Sigmoid colon (tissue), 7 donors: ENCODE measurements at regions of chr18 and their contacts with region 1.

Region 1: GRCh38 chr18:29874519-29875098 is 1167.9 kb downstream of the DSC3 start:
- DNase-seq: no peak
- H3K4me3 ChIP-seq: no peak overlapping the region
- H3K27ac ChIP-seq: no peak overlapping the region
- H3K4me1 ChIP-seq: peaks cover 0 to 9% (median 0%) of the 10 kb centered on the region in 4 donors
- H3K27me3 ChIP-seq: no peaks in the 10 kb centered on the region
- CTCF ChIP-seq: peak in 1 of 4 experiments; percentile 19
- EP300 ChIP-seq: no peak
- POLR2A ChIP-seq: no peak

Region 2: GRCh38 chr18:29626094-29626493 is 248.5 kb before region 1 on chr18:
- intact Hi-C with region 1: no loop called
- DNase-seq: no peak
- H3K4me3 ChIP-seq: no peak overlapping the region
- H3K27ac ChIP-seq: no peak overlapping the region
- H3K4me1 ChIP-seq: no peaks in the 10 kb centered on the region
- H3K27me3 ChIP-seq: no peaks in the 10 kb centered on the region
- CTCF ChIP-seq: no peak
- EP300 ChIP-seq: no peak
- POLR2A ChIP-seq: no peak

Region 3: GRCh38 chr18:29930231-29930630 is 55.6 kb after region 1 on chr18:
- intact Hi-C with region 1: no loop called
- DNase-seq: no peak
- H3K4me3 ChIP-seq: no peak overlapping the region
- H3K27ac ChIP-seq: no peak overlapping the region
- H3K4me1 ChIP-seq: no peaks in the 10 kb centered on the region
- H3K27me3 ChIP-seq: no peaks in the 10 kb centered on the region
- CTCF ChIP-seq: no peak
- EP300 ChIP-seq: no peak
- POLR2A ChIP-seq: no peak

Region 4: DNA sequence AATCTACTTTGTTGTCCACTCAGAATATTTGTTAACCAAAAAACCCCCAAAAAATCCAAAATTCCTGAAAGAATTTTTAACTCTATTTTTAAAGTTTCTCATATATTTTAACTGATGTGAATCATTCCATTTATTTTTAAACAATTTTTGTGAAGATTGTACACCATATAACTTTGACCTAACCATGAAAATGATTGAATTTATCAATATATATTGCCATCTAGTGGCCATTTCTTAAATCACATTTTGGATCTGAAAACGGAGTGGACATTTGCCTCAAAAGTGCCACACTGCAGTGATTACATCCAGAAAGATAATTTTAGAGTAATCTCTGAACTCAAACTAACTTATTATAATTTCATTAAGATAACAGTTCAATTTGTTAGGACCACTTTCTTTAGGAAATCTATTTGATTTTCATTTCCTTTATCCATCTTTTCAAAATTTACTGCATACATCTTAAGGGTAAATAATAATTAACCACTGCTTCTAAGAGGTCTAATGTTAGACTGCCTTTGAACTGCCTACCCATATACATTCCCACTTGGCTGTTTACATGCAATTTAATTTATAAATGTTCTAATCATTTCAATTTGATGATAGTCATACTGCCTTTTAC is 1096.8 kb after region 1 on chr18:
- intact Hi-C with region 1: loop called (anchors 10 kb)
- DNase-seq: no peak
- H3K4me3 ChIP-seq: no peak overlapping the region
- H3K27ac ChIP-seq: no peak overlapping the region
- H3K4me1 ChIP-seq: no peaks in the 10 kb centered on the region
- H3K27me3 ChIP-seq: no peaks in the 10 kb centered on the region
- CTCF ChIP-seq: peak in 3 of 4 experiments; percentile 21 to 44 (median 26)
- EP300 ChIP-seq: no peak
- POLR2A ChIP-seq: no peak